Colonic mucosa (tissue), 4 donors: ENCODE measurements at regions of chr1 and their contacts with region 1.

Region 1: GRCh38 chr1:234499119-234499942 is 20.4 kb upstream of the TARBP1 start:
- DNase-seq: peak; percentile 95
- H3K4me3 ChIP-seq: no peak overlapping the region
- H3K27ac ChIP-seq: peak overlapping the region; percentile 41
- H3K4me1 ChIP-seq: no peaks in the 10 kb centered on the region
- H3K27me3 ChIP-seq: no peaks in the 10 kb centered on the region
- CTCF ChIP-seq: peak; percentile 94

Region 2: GRCh38 chr1:234355782-234356510 is 143.4 kb before region 1 on chr1:
- intact Hi-C with region 1: no loop called
- DNase-seq: no peak
- H3K4me3 ChIP-seq: no peak overlapping the region
- H3K27ac ChIP-seq: no peak overlapping the region
- H3K4me1 ChIP-seq: no peaks in the 10 kb centered on the region
- H3K27me3 ChIP-seq: no peaks in the 10 kb centered on the region
- CTCF ChIP-seq: no peak

Region 3: DNA sequence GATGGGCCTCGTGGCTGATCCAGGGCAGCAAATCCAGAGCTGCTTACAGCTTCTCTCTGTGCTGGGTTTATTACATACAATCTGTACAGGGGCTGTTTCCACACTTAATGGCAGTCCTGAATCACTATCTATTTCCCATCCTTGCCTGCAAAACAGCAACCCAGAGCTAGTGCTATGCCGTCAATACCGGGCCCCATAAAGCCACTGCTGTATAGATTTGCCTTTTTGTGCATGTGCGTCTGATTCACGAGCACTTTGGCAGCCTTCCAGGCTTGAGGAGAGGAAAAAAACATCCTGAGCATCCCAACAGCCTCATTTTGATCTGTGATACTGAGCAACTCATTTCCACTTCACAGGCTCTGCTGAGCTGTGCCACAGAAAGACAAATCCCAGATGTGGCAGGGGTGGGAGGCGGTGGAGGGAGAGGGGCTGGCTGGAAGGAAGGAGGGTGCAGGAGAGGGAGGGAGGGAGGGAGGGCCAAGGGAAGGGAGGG is 44.8 kb after region 1 on chr1:
- intact Hi-C with region 1: no loop called
- DNase-seq: peak; percentile 79
- H3K4me3 ChIP-seq: no peak overlapping the region
- H3K27ac ChIP-seq: peak overlapping the region; percentile 35
- H3K4me1 ChIP-seq: peaks cover 8% of the 10 kb centered on the region
- H3K27me3 ChIP-seq: no peaks in the 10 kb centered on the region
- CTCF ChIP-seq: no peak

Region 4: DNA sequence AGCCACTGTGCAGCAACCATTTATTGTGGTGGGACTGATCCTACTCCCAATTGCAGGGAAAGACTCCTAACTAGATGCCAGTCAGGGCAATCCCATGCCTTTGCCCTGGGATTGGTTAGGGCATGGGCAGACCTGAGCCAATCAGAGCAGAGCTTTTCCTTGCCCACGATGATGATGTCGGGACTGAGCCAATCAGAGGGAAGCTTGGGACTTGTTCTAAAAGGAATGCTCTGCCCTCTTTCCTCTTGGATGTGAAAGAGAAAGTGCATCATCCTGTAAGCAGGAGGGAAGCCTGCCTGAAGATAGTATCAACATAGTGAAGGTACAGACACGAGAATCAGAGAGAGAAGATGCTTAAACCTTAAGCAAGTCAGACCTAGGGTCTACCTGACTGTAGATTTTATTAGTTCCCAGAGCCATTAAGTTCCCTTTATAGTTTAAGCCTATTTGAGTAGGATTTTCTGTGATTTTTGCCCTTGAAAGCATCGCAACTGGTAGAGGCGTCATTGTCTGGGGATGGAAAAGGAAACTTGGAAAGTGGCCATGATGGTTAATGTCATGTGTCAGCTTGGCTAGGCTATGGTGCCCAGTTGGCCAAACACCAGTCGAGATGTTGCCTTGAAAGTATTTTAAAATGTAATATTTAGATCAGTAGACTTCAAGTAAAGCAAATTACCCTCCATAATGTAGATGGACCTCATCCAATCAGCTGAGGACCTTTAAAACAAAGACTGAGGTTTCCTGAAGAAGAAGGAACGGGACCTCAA is 90.7 kb after region 1 on chr1:
- intact Hi-C with region 1: loop called (anchors 5 kb)
- DNase-seq: no peak
- H3K4me3 ChIP-seq: no peak overlapping the region
- H3K27ac ChIP-seq: no peak overlapping the region
- H3K4me1 ChIP-seq: no peaks in the 10 kb centered on the region
- H3K27me3 ChIP-seq: no peaks in the 10 kb centered on the region
- CTCF ChIP-seq: no peak

Region 5: GRCh38 chr1:234980645-234981396 is 481.5 kb after region 1 on chr1:
- intact Hi-C with region 1: loop called (anchors 10 kb)
- DNase-seq: peak; percentile 67
- H3K4me3 ChIP-seq: no peak overlapping the region
- H3K27ac ChIP-seq: peak overlapping the region; percentile 90
- H3K4me1 ChIP-seq: peaks cover 29% of the 10 kb centered on the region
- H3K27me3 ChIP-seq: no peaks in the 10 kb centered on the region
- CTCF ChIP-seq: no peak